Caco-2 (cell line): ENCODE measurements at regions of chr6 and their contacts with region 1.

Region 1: DNA sequence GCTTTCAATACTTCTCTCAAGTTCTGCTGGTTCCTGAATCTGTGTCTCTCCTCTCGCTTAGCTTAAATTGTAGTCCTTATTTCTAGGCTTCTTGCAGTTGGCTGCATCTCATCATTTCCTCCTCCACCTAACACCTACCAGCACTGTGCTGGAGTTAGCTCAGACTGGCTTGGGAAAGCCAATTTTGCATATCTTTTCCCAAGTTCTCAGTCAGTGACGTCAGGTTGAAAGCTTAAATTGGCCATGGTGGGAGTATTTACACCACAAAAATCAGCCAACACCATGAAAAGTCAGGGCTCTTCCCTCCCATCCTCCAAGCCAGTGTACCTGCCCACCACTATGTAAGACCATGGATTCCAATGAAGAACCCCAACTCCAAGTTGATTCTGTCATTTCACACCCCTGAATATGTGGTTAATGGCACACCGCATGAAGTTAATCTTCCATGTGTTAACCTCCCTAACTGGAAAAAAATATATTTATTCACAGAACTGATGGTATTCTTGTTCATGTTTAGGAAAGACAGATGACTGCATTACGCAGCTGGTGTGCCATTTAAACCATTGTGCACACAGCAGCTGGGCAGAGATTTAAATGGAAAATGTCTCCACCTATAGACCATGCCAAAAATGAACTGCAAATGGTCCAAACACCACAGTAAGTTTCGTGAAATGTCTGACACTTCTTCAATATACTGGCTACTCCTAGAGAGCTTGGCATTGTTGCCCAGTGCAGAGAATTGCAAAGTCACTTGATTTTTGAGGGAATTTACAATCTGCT is 274.1 kb upstream of the MAP3K7 start:
- DNase-seq: peak in 1 of 2 experiments; percentile 8
- H3K4me3 ChIP-seq: no peak overlapping the region
- H3K4me3 Mint-ChIP-seq: no peak overlapping the region
- H3K27ac Mint-ChIP-seq: no peak overlapping the region
- H3K4me1 ChIP-seq: no peaks in the 10 kb centered on the region
- H3K4me1 Mint-ChIP-seq: no peaks in the 10 kb centered on the region
- H3K27me3 ChIP-seq: no peaks in the 10 kb centered on the region
- H3K27me3 Mint-ChIP-seq: no peaks in the 10 kb centered on the region
- CTCF ChIP-seq: peak; percentile 16 to 35

Region 2: DNA sequence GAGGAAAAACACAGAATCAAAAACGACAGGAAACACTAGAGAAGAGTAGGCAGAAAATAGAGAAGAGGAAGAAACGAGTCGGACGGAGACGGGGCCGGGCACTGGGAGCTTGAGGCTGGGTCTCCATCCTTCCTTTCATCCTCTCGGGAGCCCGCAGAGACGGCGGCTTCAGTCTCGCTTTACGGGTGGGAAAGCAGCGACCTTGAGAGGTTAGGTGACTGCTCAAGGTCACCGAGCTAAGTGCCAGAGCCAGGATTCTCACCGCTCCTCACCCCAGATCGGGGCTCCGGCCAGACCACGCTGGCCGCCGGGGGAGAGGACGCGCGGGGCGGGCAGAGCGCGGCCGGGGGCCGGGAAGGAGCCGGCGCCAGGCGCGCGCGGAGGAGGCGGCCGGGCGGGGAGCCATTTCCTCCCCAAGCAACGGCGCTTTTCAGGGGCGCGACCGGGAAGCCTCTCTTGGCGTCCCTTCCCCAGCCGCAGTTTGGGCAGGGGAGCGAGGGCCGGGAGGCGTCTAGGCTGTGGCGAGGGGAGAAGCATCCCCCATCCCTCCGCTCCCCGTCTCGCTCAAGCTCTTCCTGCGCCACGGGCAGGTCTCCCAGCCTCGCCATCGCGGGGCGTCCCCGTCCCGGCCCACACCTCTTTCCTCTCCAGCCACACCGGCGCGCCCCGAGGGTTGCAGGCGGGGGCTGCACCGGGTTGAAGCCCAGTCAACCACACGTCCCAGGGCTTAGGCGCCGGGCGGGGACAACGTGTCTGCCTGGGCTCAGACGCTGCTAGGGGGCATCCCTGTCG is 250.1 kb before region 1 on chr6:
- CTCF ChIA-PET with region 1: no interaction called
- POLR2A ChIA-PET with region 1: no interaction called
- intact Hi-C with region 1: loop called (anchors 1 kb)
- DNase-seq: peak in 1 of 2 experiments; percentile 20
- H3K4me3 ChIP-seq: peak overlapping the region; percentile 25
- H3K4me3 Mint-ChIP-seq: peak overlapping the region; percentile 72
- H3K27ac Mint-ChIP-seq: no peak overlapping the region
- H3K4me1 ChIP-seq: 0 out of 2 replicates have a peak, but pooled peaks cover 5% of the 10 kb centered on the region
- H3K4me1 Mint-ChIP-seq: peaks cover 7% of the 10 kb centered on the region
- H3K27me3 ChIP-seq: 0 out of 2 replicates have a peak, but pooled peaks cover 2% of the 10 kb centered on the region
- H3K27me3 Mint-ChIP-seq: peaks cover 28% of the 10 kb centered on the region
- CTCF ChIP-seq: no peak